WTC11 (cell line): ENCODE measurements at regions of chr4 and their contacts with region 1.

Region 1: GRCh38 chr4:173257732-173258717 is 76.1 kb downstream of the HMGB2 start:
- DNase-seq: peak; percentile 77
- ATAC-seq: peak; percentile 96
- H3K4me3 Mint-ChIP-seq: no peak overlapping the region; the same call in 1 of the 2 replicates
- H3K27ac Mint-ChIP-seq: peak overlapping the region; percentile 77
- H3K4me1 Mint-ChIP-seq: peaks cover 48% of the 10 kb centered on the region
- H3K27me3 Mint-ChIP-seq: no peaks in the 10 kb centered on the region
- CTCF ChIP-seq: peak; percentile 51

Region 2: DNA sequence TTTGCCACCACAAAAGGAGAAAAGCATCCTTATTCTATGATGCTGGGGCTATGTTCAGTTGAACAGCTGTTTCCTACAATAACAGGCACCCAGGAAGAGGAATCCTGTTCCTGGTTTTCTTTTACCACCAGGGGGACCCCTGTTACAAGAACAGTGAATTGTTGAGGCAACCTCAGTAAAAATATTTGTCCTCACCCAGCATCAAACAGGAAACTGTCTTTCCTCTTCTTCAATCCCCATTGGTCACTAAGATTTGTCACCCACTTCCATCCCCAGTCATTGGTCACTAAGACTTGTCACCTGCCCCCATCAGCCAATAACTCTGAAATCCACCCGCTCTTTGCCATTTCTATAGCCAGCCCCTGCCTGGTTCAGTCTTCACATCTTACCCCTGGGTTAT is 232.9 kb before region 1 on chr4:
- CTCF ChIA-PET with region 1: interaction called, 63 read pairs
- POLR2A ChIA-PET with region 1: no interaction called
- DNase-seq: peak; percentile 55
- ATAC-seq: peak; percentile 88
- H3K4me3 Mint-ChIP-seq: no peak overlapping the region
- H3K27ac Mint-ChIP-seq: no peak overlapping the region
- H3K4me1 Mint-ChIP-seq: peaks cover 47% of the 10 kb centered on the region
- H3K27me3 Mint-ChIP-seq: no peaks in the 10 kb centered on the region
- CTCF ChIP-seq: peak; percentile 67

Region 3: GRCh38 chr4:173168396-173169177 is 89.4 kb before region 1 on chr4 and contains the start of gene GALNT7:
- CTCF ChIA-PET with region 1: interaction called, 21 read pairs
- POLR2A ChIA-PET with region 1: interaction called, 3 read pairs
- DNase-seq: peak; percentile 87
- ATAC-seq: peak; percentile 81
- H3K4me3 Mint-ChIP-seq: peak within 1 kb of the TSS; percentile 88
- H3K27ac Mint-ChIP-seq: peak within 1 kb of the TSS; percentile 98
- H3K4me1 Mint-ChIP-seq: peaks cover 50% of the 10 kb centered on the region
- H3K27me3 Mint-ChIP-seq: no peaks in the 10 kb centered on the region
- CTCF ChIP-seq: no peak
- total RNA-seq, gene GALNT7: 79.9 to 86.9 TPM (median 82.8 TPM) in 3 replicates